B cell (primary cell): ENCODE measurements at regions of chr6 and their contacts with region 1.

Region 1: GRCh38 chr6:149565527-149566409 is at the start of gene GINM1:
- DNase-seq: peak; percentile 98
- ATAC-seq: peak; percentile 83
- H3K4me3 ChIP-seq: peak within 1 kb of the TSS; percentile 83 to 100 (median 96)
- H3K4me3 Mint-ChIP-seq: peak within 1 kb of the TSS; percentile 99
- H3K27ac ChIP-seq: peak within 1 kb of the TSS; percentile 84 to 92
- H3K27ac Mint-ChIP-seq: peak within 1 kb of the TSS; percentile 98
- H3K4me1 ChIP-seq: peaks cover 13 to 26% of the 10 kb centered on the region in 2 donors
- H3K4me1 Mint-ChIP-seq: peaks cover 23% of the 10 kb centered on the region
- H3K27me3 ChIP-seq: no peaks in the 10 kb centered on the region
- H3K27me3 Mint-ChIP-seq: no peaks in the 10 kb centered on the region
- CTCF ChIP-seq: peak; percentile 77
- total RNA-seq, gene GINM1: 22.1 and 23.0 TPM in 2 replicates

Region 2: DNA sequence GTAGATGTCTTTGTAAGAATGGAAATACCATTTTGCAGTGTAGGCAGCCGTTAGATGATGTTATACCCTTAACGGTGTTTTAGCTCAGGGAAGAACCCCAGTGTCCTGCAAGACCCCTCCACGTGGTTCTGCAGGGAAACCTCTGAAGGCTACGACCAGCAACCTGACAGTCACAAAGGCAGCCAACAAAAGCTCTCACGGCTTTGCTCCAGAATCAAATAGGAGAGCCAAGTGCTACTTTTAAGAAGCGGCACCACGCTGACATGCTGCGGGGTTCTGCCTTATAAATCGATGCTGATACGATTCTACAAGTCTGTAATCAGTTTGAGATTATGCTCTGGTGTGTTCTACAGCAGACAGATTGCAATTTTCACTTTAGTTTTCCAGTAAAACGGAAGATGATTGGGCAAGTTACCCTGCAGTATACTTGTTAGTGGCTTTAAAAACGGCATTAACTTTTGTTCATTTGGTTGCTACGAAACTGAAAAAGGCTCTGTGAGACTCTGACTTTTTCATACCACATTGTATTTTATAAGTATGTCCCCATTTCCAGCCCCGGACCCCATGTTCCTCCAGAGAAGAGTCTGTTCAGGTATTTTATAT is 1744.4 kb before region 1 on chr6:
- CTCF ChIA-PET with region 1: no interaction called
- POLR2A ChIA-PET with region 1: no interaction called
- intact Hi-C with region 1: no loop called
- DNase-seq: no peak
- ATAC-seq: no peak
- H3K4me3 ChIP-seq: no peak overlapping the region
- H3K4me3 Mint-ChIP-seq: no peak overlapping the region
- H3K27ac ChIP-seq: no peak overlapping the region
- H3K27ac Mint-ChIP-seq: no peak overlapping the region
- H3K4me1 ChIP-seq: no peaks in the 10 kb centered on the region
- H3K4me1 Mint-ChIP-seq: no peaks in the 10 kb centered on the region
- H3K27me3 ChIP-seq: no peaks in the 10 kb centered on the region
- H3K27me3 Mint-ChIP-seq: no peaks in the 10 kb centered on the region
- CTCF ChIP-seq: no peak

Region 3: GRCh38 chr6:149545754-149546528 is 19.8 kb before region 1 on chr6 and contains the start of gene PPIL4:
- CTCF ChIA-PET with region 1: interaction called, 90 read pairs
- POLR2A ChIA-PET with region 1: interaction called, 22 read pairs
- intact Hi-C with region 1: loop called (anchors 1 kb)
- DNase-seq: peak; percentile 98
- ATAC-seq: peak; percentile 90
- H3K4me3 ChIP-seq: peak within 1 kb of the TSS; percentile 96 to 100 (median 98)
- H3K4me3 Mint-ChIP-seq: peak within 1 kb of the TSS; percentile 98
- H3K27ac ChIP-seq: peak within 1 kb of the TSS; percentile 99
- H3K27ac Mint-ChIP-seq: peak within 1 kb of the TSS; percentile 98
- H3K4me1 ChIP-seq: peaks cover 17 to 22% of the 10 kb centered on the region in 2 donors
- H3K4me1 Mint-ChIP-seq: peaks cover 39% of the 10 kb centered on the region
- H3K27me3 ChIP-seq: no peaks in the 10 kb centered on the region
- H3K27me3 Mint-ChIP-seq: peaks cover 6% of the 10 kb centered on the region
- CTCF ChIP-seq: peak; percentile 83
- total RNA-seq, gene PPIL4: 34.3 and 36.1 TPM in 2 replicates

Region 4: GRCh38 chr6:149717588-149718458 is 152.1 kb after region 1 on chr6 and contains the start of gene LATS1:
- CTCF ChIA-PET with region 1: interaction called, 3 read pairs
- POLR2A ChIA-PET with region 1: interaction called, 8 read pairs
- intact Hi-C with region 1: loop called (anchors 1 kb)
- DNase-seq: peak; percentile 91
- ATAC-seq: peak; percentile 92
- H3K4me3 ChIP-seq: peak within 1 kb of the TSS; percentile 80 to 92 (median 86)
- H3K4me3 Mint-ChIP-seq: peak within 1 kb of the TSS; percentile 91
- H3K27ac ChIP-seq: peak within 1 kb of the TSS; percentile 79 to 92
- H3K27ac Mint-ChIP-seq: peak within 1 kb of the TSS; percentile 95
- H3K4me1 ChIP-seq: peaks cover 23% of the 10 kb centered on the region in 2 donors
- H3K4me1 Mint-ChIP-seq: peaks cover 33% of the 10 kb centered on the region
- H3K27me3 ChIP-seq: no peaks in the 10 kb centered on the region
- H3K27me3 Mint-ChIP-seq: no peaks in the 10 kb centered on the region
- CTCF ChIP-seq: no peak
- total RNA-seq, gene LATS1: 48.0 and 54.0 TPM in 2 replicates

Region 5: DNA sequence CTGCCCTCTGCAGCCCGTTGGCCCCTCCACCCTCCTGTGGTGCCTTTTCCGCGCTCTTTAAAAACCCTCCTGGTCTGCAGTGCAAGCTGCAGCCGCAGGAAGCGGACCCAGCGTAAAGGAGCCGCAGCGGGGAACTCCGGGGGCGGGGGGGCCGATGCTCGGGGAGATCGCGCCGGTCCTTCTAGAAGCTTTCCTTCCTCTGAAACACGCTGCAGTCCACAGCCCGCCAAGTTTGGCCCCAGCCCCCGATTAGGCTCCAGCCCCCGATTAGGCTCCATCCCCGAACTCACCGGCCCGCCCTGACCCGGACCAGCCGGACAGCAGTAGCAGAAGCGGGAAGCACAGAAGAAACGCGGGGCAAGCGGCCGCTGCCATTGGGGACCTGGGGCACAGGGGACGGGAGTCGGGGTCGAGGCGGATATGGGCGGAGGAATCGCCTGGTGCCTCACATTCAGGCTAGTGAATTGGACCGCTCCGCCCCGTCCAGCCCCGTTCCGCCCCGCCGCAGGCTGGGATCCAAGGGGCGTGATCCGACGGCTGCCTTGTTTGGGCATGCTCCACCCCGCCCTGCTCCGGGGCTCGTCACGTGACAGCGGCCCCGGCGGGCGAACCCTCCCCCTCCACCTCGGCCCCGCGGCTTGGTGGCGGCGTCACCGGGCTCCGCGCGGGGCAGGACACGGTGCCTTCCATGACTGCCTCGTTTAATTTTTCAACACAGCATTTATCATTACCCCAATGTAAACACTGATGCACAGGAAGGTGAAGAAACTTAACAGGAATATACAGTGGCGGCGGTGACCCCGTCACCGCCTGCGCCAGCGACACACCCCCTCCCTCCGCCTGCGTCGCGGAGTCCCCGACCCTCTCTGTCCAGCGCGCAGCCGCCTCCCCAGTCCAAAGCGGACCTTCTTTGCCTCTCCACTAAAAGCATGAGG is 439.3 kb after region 1 on chr6:
- CTCF ChIA-PET with region 1: no interaction called
- POLR2A ChIA-PET with region 1: no interaction called
- intact Hi-C with region 1: loop called (anchors 10 kb)
- DNase-seq: peak; percentile 93
- ATAC-seq: peak; percentile 81
- H3K4me3 ChIP-seq: peak overlapping the region; percentile 25 to 86 (median 69)
- H3K4me3 Mint-ChIP-seq: peak overlapping the region; percentile 96
- H3K27ac ChIP-seq: peak overlapping the region; percentile 93 to 97
- H3K27ac Mint-ChIP-seq: peak overlapping the region; percentile 97
- H3K4me1 ChIP-seq: peaks cover 16 to 28% of the 10 kb centered on the region in 2 donors
- H3K4me1 Mint-ChIP-seq: peaks cover 32% of the 10 kb centered on the region
- H3K27me3 ChIP-seq: peaks cover 0 to 32% (median 10%) of the 10 kb centered on the region in 4 experiments
- H3K27me3 Mint-ChIP-seq: peaks cover 13% of the 10 kb centered on the region
- CTCF ChIP-seq: no peak

Region 6: GRCh38 chr6:151044465-151045441 is 1479.0 kb after region 1 on chr6:
- CTCF ChIA-PET with region 1: no interaction called
- POLR2A ChIA-PET with region 1: no interaction called
- intact Hi-C with region 1: no loop called
- DNase-seq: no peak
- ATAC-seq: no peak
- H3K4me3 ChIP-seq: no peak overlapping the region
- H3K4me3 Mint-ChIP-seq: no peak overlapping the region
- H3K27ac ChIP-seq: no peak overlapping the region
- H3K27ac Mint-ChIP-seq: no peak overlapping the region
- H3K4me1 ChIP-seq: no peaks in the 10 kb centered on the region
- H3K4me1 Mint-ChIP-seq: peaks cover 2% of the 10 kb centered on the region
- H3K27me3 ChIP-seq: no peaks in the 10 kb centered on the region
- H3K27me3 Mint-ChIP-seq: no peaks in the 10 kb centered on the region
- CTCF ChIP-seq: no peak